ENCODE measurements at regions of chr18 and their contacts with region 1.

Region 1: DNA sequence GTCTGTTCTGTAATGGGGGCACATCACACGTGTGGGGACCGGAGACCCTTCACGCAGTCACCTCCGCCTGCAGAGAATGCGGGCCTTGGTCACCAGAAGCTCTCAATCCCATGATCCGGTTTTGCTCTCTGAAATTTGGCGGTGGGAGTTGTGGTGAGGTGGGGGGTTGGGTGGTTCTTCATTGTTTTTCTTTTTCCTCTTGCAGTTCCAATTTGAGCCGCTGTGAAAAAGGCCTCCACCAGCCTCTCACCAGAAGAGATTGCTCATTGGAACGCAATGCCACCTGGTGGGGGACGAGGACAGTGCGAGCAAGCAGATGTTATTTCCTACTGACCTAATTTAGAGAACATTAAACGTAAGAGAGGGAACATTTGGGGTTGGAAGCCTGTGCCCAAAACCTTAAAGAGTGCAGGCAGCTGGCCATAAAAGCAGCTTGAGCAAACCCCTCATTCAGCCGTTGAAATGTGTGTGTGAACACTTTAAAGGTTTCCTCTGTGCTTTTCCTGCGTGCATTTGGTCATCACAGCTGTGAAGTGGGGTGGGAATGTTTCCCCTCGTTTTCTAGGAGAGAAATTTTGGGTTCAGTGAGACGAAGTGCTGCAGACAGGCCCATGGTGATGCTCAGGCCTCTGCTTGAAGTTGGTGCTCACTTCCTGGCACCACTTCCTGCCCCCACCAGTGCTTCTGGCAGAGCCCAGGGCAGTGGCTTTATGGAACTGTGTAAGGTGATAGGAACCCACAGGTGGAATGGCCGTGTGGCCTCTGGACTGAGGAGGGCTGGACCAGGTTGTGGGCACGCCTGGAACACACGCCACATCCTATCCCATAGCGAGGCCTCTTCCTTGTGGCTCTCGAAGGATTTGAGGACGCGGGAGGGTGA is 61.7 kb downstream of the ZCCHC2 start:
- DNase-seq: peak; percentile 93

Region 2: DNA sequence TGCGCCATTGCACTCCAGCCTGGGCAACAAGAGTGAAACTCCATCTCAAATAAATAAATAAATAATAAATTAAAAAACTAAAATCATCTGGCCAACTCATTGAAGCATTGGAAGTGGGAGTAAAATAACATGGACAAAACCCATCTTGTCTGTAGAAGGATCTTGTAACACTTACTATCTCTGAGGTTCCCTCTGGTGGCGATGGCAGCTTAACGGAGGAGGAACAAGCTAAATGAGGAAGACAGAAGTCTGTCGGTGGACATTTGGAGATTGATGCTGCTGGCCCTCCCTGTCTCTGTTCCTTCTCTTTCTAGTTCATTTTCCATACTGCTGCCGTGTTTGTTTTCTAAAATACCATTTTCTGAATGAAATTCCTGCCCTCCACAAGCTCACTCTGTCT is 18.3 kb before region 1 on chr18:
- intact Hi-C with region 1: loop called in 1 of 2 experiments (anchors 1 kb)
- DNase-seq: no peak

Region 3: GRCh38 chr18:62596145-62597005 is 11.9 kb after region 1 on chr18:
- intact Hi-C with region 1: no loop called
- DNase-seq: no peak

Region 4: DNA sequence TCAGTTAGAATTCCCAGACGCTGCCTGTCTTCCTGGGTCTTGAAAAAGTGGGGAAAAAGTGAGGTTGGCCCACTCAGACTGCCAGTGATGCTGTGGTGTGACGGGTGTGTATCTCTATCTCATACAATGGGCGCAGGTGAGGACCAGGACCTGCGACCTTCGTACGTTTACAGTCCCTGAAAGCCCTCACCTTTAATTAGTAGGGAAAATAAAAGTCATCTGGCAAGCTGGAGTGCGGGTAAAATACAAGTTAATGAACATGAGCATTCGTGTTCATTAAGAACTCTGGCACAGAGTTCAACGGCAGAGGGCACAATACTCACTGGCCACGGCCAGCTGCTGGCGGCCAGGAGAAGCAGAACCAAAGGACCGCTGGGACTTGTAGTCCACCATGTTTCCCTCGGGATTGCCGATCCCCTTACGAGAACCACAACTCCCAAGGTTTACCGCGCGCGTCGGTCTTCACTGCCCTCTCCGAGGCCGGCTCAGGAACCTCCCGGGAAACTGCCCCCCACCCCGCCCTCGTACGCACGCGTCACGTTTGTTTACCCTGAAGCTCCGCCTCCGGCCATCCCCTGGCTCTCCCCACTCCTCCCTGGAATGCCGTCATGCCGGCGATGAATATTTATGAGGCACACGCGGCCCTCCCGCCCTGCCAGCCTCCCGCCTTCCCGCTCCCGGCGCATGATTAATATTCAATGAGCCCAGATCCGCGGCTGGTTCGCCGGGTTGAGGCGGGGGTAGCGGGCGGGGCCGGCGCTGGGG is 130.4 kb after region 1 on chr18:
- intact Hi-C with region 1: loop called in 1 of 2 experiments (anchors 5 kb)
- DNase-seq: peak; percentile 100

Region 5: GRCh38 chr18:62982600-62983251 is 398.2 kb after region 1 on chr18:
- intact Hi-C with region 1: loop called (anchors 5 kb)
- DNase-seq: no peak

Region 6: DNA sequence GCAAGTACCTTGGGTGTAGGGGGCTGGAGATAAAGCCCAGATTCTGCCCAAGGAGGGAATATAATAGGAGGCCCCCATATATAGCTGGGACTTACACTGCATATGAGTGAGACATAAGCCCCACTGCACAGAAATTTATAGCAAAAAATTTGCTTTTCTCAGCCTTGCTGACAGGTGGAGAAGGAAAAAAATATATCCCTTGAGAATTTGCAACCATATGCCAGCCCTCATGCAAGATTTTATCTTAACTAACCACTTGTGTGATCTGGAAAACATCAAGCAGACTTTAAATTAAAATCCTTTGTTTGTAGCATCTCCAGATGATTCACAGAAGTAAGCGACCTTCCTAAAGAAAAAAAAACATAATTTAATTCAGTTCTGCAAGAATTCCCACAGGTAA is 446.9 kb after region 1 on chr18:
- intact Hi-C with region 1: no loop called
- DNase-seq: no peak